ENCODE measurements at regions of chr11 and their contacts with region 1.

Region 1: GRCh38 chr11:75562048-75562835 is at the start of gene SERPINH1:
- DNase-seq: peak; percentile 58
- ATAC-seq: peak; percentile 95
- H3K4me3 ChIP-seq: peak within 1 kb of the TSS; percentile 82
- H3K27ac ChIP-seq: peak within 1 kb of the TSS; percentile 94
- H3K4me1 ChIP-seq: peaks cover 5% of the 10 kb centered on the region
- H3K27me3 ChIP-seq: no peaks in the 10 kb centered on the region
- CTCF ChIP-seq: no peak
- EP300 ChIP-seq: no peak
- POLR2A ChIP-seq: peak; percentile 86
- RAD21 ChIP-seq: no peak
- polyA plus RNA-seq, gene SERPINH1: 0.34 to 1.4 TPM

Region 2: GRCh38 chr11:75518771-75519653 is 43.2 kb before region 1 on chr11:
- CTCF ChIA-PET with region 1: no interaction called
- POLR2A ChIA-PET with region 1: no interaction called
- RAD21 ChIA-PET with region 1: no interaction called
- SMC1A ChIA-PET with region 1: no interaction called
- in situ Hi-C with region 1: no loop called
- intact Hi-C with region 1: no loop called
- DNase-seq: no peak
- ATAC-seq: no peak
- H3K4me3 ChIP-seq: no peak overlapping the region
- H3K27ac ChIP-seq: no peak overlapping the region
- H3K4me1 ChIP-seq: peaks cover 36% of the 10 kb centered on the region
- H3K27me3 ChIP-seq: no peaks in the 10 kb centered on the region; a peak in 1 of 4 replicates
- CTCF ChIP-seq: no peak
- EP300 ChIP-seq: no peak
- POLR2A ChIP-seq: no peak
- RAD21 ChIP-seq: no peak

Region 3: DNA sequence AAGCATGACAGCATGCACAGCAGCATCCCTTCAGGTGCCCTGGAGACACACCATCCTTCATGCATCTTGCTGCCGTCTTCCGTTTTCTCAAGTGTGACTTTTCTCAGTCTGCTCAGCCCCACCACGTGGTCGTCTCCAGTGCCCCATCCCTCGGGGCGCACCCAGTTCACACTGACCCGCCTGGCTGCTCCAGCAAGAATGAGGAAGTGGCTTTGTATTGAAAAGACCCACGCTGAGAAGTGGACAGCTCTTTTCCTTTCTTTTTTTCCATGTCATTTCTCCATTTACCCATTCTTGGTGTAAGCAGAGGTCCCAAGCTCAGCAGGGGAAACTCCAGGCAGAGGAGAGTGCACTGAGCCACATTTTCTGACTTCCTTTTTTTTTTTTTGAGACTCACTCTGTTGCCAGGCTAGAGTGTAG is 14.3 kb after region 1 on chr11:
- CTCF ChIA-PET with region 1: interaction called, 7 read pairs
- POLR2A ChIA-PET with region 1: interaction called, 15 read pairs
- RAD21 ChIA-PET with region 1: interaction called, 3 read pairs
- SMC1A ChIA-PET with region 1: interaction called, 4 read pairs
- in situ Hi-C with region 1: no loop called
- intact Hi-C with region 1: no loop called
- DNase-seq: peak; percentile 45
- ATAC-seq: peak; percentile 93
- H3K4me3 ChIP-seq: no peak overlapping the region
- H3K27ac ChIP-seq: no peak overlapping the region
- H3K4me1 ChIP-seq: peaks cover 9% of the 10 kb centered on the region; the same call in 1 of the 2 replicates
- H3K27me3 ChIP-seq: no peaks in the 10 kb centered on the region
- CTCF ChIP-seq: no peak; a peak in 1 of 6 replicates
- EP300 ChIP-seq: no peak
- POLR2A ChIP-seq: no peak
- RAD21 ChIP-seq: no peak

Measured in GM12878 (cell line).